ENCODE measurements at regions of chr17 and their contacts with region 1.

Region 1: GRCh38 chr17:44350733-44351226 is 5.7 kb downstream of the GRN start:
- DNase-seq: peak; percentile 59 to 82 (median 69)
- ATAC-seq: peak; percentile 56 to 77
- H3K4me3 Mint-ChIP-seq: peak overlapping the region in 2 of 10 donors; percentile 20 to 50
- H3K27ac Mint-ChIP-seq: peak overlapping the region in 2 of 10 donors; percentile 43 to 59
- H3K4me1 Mint-ChIP-seq: peaks cover 8 to 32% (median 19%) of the 10 kb centered on the region in 4 donors
- H3K27me3 Mint-ChIP-seq: no peaks in the 10 kb centered on the region

Region 2: DNA sequence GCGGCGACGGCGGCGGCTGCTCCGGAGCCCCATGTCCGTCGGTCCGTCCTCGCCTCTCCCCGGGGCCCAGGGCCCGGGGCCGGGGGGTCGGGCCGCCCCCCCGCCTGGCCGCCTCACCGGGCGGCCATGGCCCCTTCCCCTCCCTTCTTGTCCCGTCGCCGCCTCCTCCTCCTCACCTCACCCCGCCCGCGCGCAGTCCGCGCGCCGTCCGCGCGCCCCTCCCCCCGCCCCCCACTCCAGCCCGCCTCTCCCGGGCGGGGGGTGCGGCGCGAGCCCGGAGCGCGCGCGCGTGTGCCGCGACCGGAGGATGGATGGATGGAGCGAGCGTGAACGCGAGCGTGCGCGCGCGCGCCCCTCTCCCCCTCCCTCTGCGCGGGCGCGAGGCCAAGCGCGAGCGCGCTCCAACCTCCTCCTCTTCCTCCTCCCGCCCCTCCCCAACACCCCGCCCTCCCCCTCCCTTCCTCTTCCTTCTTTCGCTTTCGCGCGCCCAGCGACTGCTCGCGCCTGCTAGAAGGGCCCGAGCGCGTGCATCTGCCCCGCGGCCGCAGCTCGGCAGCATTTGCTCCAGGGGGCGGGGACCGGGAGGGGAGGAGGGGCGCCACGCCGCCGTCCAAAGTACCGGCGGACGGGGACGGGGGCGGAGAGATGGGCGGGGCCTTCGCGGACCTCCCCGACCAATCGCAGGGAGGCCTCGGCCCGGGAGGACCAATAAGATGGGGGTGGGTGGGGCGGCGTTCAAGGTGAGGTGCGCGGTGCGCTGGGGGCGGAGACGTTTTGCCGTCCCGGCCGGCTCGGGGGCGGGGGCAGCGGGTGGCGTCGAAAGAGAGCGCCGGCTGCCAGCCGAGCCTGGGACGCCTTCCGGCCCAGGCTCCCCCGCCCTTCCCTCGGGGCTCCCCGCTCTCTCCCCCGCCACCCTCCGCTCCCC is 151.0 kb before region 1 on chr17 and contains the start of gene ATXN7L3:
- POLR2A ChIA-PET with region 1: interaction called, 10 read pairs
- DNase-seq: peak; percentile 91 to 100 (median 98)
- ATAC-seq: peak; percentile 77 to 81
- H3K4me3 Mint-ChIP-seq: peak within 1 kb of the TSS; percentile 85 to 96 (median 90)
- H3K27ac Mint-ChIP-seq: peak within 1 kb of the TSS; percentile 86 to 99 (median 95)
- H3K4me1 Mint-ChIP-seq: peaks cover 39 to 59% (median 48%) of the 10 kb centered on the region in 4 donors
- H3K27me3 Mint-ChIP-seq: no peaks in the 10 kb centered on the region
- polyA plus RNA-seq, gene ATXN7L3: 9.3 to 14.2 (median 10.6) TPM

Region 3: DNA sequence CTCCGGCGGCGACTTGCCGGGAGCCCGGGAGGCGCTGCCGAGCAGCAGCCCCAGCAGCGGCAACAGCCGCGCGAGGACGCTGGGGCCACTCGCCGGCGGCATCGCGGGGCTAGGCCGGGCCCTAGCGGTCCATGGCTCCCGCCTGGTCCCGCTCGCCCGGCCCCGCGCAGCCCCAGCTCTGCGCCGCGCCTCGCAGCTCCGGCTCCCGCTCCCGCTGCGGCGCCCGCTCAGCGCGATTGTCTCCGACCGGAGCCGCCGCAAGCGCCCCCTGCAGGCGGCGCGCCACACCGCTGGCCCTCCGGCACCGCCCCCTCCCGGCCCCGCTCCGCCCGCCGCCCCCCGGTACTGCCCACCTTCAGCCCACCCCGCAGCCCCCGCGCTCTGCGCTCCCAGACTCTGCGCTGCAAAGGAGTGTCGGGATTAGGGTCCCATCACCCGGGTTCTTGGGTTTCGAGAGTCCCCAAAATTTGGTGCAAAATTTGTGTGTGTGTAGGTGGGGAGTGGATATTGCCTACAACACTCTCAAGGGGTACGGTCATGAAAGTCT is 12.9 kb after region 1 on chr17 and contains the start of gene FAM171A2:
- POLR2A ChIA-PET with region 1: interaction called, 10 read pairs
- DNase-seq: peak; percentile 50 to 80 (median 72)
- ATAC-seq: peak; percentile 89 to 91
- H3K4me3 Mint-ChIP-seq: peak within 1 kb of the TSS; percentile 72 to 87 (median 80)
- H3K27ac Mint-ChIP-seq: no peak within 1 kb of the TSS
- H3K4me1 Mint-ChIP-seq: peaks cover 8 to 11% (median 8%) of the 10 kb centered on the region in 4 donors
- H3K27me3 Mint-ChIP-seq: peaks cover 3 to 31% (median 11%) of the 10 kb centered on the region in 5 donors
- polyA plus RNA-seq, gene FAM171A2: 0.08 to 0.33 (median 0.10) TPM